ENCODE measurements at regions of chr10 and their contacts with region 1.

Region 1: DNA sequence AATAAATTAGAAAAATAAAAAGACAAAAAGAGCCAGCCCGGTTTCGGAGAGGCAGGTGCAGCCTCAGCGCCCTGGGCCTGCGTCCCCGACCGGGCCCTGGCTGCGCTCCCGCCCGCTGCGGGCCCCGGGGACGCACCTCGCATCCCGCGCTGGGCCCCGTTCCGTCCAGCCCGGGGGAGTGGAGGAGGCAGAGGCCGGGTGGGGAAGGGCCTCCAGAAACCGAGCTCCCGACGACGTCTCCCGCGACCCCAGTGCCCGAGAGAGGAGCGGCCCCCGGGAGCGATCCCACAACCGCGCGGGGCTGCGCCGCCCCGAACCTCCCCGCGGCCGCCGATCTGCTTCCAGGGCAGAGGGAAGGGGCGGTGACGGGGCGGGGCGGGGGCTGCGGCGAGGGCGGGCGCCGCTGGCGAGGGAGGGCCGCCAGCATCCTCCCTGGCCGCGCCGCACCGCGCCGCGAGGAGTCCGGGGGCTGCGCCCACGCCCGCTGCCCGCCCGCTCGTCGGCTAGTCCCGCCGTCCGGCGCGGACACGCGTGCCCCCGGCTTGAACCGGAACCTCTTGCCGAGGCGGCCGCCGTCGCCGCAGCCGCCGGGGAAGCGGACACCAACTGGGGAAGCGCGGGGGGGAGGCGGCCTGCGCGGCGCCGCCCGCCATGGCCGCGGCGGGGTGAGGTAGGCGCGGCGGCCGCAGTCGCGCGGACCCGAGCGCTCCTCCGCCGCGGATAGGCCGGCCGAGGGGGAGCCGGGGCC is at the start of gene CCNY:
- DNase-seq: peak; percentile 90
- ATAC-seq: peak; percentile 59
- H3K4me3 Mint-ChIP-seq: peak within 1 kb of the TSS; percentile 89
- H3K27ac Mint-ChIP-seq: peak within 1 kb of the TSS; percentile 90
- H3K4me1 Mint-ChIP-seq: peaks cover 71% of the 10 kb centered on the region
- H3K27me3 Mint-ChIP-seq: no peaks in the 10 kb centered on the region
- total RNA-seq, gene CCNY: 49.4 to 54.0 TPM

Region 2: GRCh38 chr10:35090162-35090954 is 245.9 kb before region 1 on chr10 and contains the start of gene CUL2:
- CTCF ChIA-PET with region 1: no interaction called
- POLR2A ChIA-PET with region 1: no interaction called
- intact Hi-C with region 1: loop called in 1 of 2 experiments (anchors 1 kb)
- DNase-seq: peak; percentile 94
- ATAC-seq: peak; percentile 96
- H3K4me3 Mint-ChIP-seq: peak within 1 kb of the TSS; percentile 93
- H3K27ac Mint-ChIP-seq: peak within 1 kb of the TSS; percentile 96
- H3K4me1 Mint-ChIP-seq: peaks cover 45% of the 10 kb centered on the region
- H3K27me3 Mint-ChIP-seq: no peaks in the 10 kb centered on the region
- total RNA-seq, gene CUL2: 42.7 to 45.3 TPM

Region 3: DNA sequence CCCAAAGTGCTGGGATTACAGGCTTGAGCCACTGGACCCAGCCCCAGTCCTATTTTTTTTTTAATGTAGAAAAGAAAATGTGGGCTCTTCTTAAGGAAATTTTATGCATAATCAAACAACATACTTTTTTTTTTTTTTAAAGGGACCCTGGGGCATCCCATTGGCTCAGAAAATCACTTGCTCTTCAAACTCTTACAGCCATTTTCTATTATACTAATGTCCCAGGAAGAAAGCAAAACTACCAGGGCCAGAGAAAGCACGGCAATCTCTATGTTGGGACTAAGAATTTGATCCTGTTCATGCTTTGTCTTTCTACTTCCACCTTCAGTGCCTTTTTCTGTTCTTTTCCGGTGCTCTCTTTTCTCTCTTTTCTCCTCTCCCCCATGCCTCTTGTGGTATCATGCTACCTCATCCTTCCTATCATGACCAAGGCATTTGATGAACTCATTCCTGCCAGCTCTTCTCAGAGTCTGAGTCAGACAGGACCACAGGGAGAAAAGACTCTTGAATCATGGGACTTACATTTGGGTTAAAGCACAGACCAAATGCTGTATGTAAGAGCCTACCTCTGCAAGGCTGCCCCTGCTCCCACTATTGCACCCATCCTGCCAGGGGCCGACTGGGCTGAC is 76.4 kb before region 1 on chr10:
- CTCF ChIA-PET with region 1: no interaction called
- POLR2A ChIA-PET with region 1: no interaction called
- intact Hi-C with region 1: no loop called
- DNase-seq: peak; percentile 23
- ATAC-seq: peak; percentile 94
- H3K4me3 Mint-ChIP-seq: no peak overlapping the region
- H3K27ac Mint-ChIP-seq: no peak overlapping the region
- H3K4me1 Mint-ChIP-seq: peaks cover 3% of the 10 kb centered on the region
- H3K27me3 Mint-ChIP-seq: peaks cover 10% of the 10 kb centered on the region

Region 4: GRCh38 chr10:35324196-35324595 is 12.1 kb before region 1 on chr10:
- CTCF ChIA-PET with region 1: no interaction called
- POLR2A ChIA-PET with region 1: no interaction called
- intact Hi-C with region 1: no loop called
- DNase-seq: no peak
- ATAC-seq: no peak
- H3K4me3 Mint-ChIP-seq: no peak overlapping the region
- H3K27ac Mint-ChIP-seq: no peak overlapping the region
- H3K4me1 Mint-ChIP-seq: peaks cover 23% of the 10 kb centered on the region
- H3K27me3 Mint-ChIP-seq: no peaks in the 10 kb centered on the region

Region 5: GRCh38 chr10:35355971-35356724 is 19.9 kb after region 1 on chr10:
- CTCF ChIA-PET with region 1: interaction called, 7 read pairs
- POLR2A ChIA-PET with region 1: interaction called, 8 read pairs
- intact Hi-C with region 1: loop called (anchors 1 kb)
- DNase-seq: peak; percentile 67
- ATAC-seq: peak; percentile 76
- H3K4me3 Mint-ChIP-seq: peak overlapping the region; percentile 71
- H3K27ac Mint-ChIP-seq: peak overlapping the region; percentile 94
- H3K4me1 Mint-ChIP-seq: peaks cover 78% of the 10 kb centered on the region
- H3K27me3 Mint-ChIP-seq: no peaks in the 10 kb centered on the region

Region 6: DNA sequence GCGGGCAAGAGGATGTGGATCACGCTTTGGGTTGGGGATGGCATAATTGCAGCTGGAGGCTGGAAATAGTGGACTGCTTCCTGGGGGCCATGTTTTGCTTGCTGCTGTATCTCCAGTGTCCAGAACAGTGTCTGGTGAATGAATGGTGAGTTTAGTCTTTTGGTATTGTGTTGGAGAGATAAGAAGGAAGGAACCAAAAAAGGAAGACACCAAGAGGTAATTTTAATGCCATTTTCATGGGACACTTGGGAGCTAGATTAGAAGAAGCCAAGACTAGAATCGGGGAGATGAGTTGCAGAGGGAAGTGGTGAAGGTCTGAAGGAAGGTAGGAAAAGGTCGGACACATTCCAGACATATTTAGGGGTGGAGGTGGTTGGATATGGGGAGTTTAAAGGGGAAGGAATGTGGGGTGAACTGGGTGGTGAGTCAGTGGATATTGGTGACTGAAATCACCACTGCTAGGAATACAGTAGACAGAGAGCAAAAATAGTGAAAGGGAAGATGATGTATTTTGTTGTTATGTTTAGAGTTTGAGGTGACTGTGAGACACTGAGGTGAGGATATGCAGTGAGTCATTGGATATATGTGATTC is 76.7 kb after region 1 on chr10:
- CTCF ChIA-PET with region 1: no interaction called
- POLR2A ChIA-PET with region 1: no interaction called
- intact Hi-C with region 1: loop called in 1 of 2 experiments (anchors 2 kb)
- DNase-seq: no peak
- ATAC-seq: peak; percentile 71
- H3K4me3 Mint-ChIP-seq: no peak overlapping the region
- H3K27ac Mint-ChIP-seq: no peak overlapping the region
- H3K4me1 Mint-ChIP-seq: peaks cover 49% of the 10 kb centered on the region
- H3K27me3 Mint-ChIP-seq: no peaks in the 10 kb centered on the region

Region 7: GRCh38 chr10:35540296-35541164 is 204.3 kb after region 1 on chr10:
- CTCF ChIA-PET with region 1: no interaction called
- POLR2A ChIA-PET with region 1: no interaction called
- intact Hi-C with region 1: loop called in 1 of 2 experiments (anchors 5 kb)
- DNase-seq: no peak
- ATAC-seq: peak; percentile 31
- H3K4me3 Mint-ChIP-seq: no peak overlapping the region
- H3K27ac Mint-ChIP-seq: peak overlapping the region; percentile 52
- H3K4me1 Mint-ChIP-seq: peaks cover 28% of the 10 kb centered on the region
- H3K27me3 Mint-ChIP-seq: no peaks in the 10 kb centered on the region